WTC11 (cell line): ENCODE measurements at regions of chr2 and their contacts with region 1.

Region 1: DNA sequence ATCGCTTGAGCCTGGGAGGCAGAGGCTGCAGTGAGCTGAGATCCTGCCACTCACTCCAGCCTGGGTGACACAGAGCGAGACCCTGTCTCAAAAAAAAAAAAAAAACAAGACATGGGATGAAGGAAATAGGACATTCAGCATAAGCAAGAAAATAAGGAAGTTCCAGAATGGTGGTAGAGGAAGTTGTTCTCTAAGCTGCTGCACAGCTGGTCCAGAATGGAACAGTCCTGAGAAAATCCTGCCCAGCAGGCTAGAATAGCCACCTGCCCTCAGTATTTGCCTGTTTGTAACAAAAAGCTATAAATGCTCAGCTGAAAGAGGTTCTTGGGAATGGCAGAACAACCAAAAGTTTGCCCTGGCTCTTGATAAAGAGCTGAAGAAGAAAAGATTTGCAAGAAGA is 11.1 kb upstream of the MAPRE3 start:
- DNase-seq: no peak
- ATAC-seq: no peak
- H3K4me3 Mint-ChIP-seq: no peak overlapping the region
- H3K27ac Mint-ChIP-seq: no peak overlapping the region
- H3K4me1 Mint-ChIP-seq: no peaks in the 10 kb centered on the region
- H3K27me3 Mint-ChIP-seq: peaks cover 7% of the 10 kb centered on the region; the same call in 1 of the 2 replicates
- CTCF ChIP-seq: no peak

Region 2: GRCh38 chr2:26870585-26871095 is 88.7 kb before region 1 on chr2:
- CTCF ChIA-PET with region 1: no interaction called
- POLR2A ChIA-PET with region 1: no interaction called
- DNase-seq: no peak
- ATAC-seq: no peak
- H3K4me3 Mint-ChIP-seq: no peak overlapping the region
- H3K27ac Mint-ChIP-seq: no peak overlapping the region
- H3K4me1 Mint-ChIP-seq: peaks cover 5% of the 10 kb centered on the region; the same call in 1 of the 2 replicates
- H3K27me3 Mint-ChIP-seq: peaks cover 52% of the 10 kb centered on the region
- CTCF ChIP-seq: no peak

Region 3: DNA sequence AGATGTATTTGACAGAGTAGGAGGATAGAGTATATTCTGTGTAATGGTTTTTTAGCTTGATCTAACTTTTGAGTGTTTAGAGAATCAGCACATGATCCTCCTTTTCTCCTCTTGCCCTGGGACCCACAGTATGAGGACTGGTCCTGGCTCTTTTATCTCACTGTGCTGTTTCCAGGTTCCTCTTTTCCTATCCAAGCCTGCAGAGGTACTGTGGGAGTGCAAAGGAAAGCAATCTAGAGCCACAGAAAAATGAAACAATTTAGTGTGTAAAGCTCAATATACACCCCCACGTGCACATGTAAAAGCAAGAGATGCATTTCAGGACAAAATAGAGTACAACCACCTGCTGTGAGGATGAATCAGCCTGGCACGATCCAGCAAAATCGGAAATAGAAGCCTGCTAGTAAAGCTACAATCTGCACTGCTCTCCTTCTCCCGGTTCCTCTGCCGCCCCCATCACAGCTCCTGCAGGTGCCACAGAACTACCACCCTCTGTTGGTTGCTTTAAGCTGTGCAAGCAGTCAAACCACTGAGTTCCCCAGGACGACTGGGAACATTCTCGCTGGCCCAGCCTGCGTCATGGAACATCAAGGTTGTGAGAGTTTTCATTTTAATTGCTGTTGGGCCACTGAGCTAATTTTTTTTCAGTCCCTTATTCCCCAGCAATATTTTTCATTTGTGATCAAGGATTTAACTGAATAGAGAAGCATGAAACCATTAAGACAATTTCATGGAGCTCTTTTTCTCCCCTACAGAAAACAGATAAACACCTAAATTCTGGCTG is 36.7 kb before region 1 on chr2:
- CTCF ChIA-PET with region 1: interaction called, 14 read pairs
- POLR2A ChIA-PET with region 1: no interaction called
- DNase-seq: peak; percentile 73
- ATAC-seq: peak; percentile 90
- H3K4me3 Mint-ChIP-seq: no peak overlapping the region
- H3K27ac Mint-ChIP-seq: no peak overlapping the region
- H3K4me1 Mint-ChIP-seq: peaks cover 13% of the 10 kb centered on the region
- H3K27me3 Mint-ChIP-seq: no peaks in the 10 kb centered on the region
- CTCF ChIP-seq: peak; percentile 28; the same call in 1 of the 2 replicates

Region 4: DNA sequence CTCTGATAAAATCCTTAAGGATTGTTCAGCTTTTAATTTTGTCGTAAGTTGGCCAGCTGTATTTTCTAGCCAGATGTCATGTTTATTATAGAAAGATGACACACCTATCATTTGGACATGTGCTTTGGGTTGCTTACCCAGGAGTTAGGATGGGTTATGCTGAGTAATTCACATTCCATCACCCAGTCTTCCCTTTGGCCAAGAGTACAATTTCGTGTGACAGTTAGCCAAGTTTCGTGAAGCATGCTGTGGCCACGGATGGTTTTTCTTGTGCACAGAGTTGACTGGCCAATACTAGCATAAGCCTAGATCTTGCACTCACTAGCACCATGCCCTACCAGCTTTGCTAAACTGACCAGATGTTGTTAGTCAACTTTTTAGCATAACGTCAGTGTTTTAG is 16.9 kb after region 1 on chr2:
- CTCF ChIA-PET with region 1: interaction called, 30 read pairs
- POLR2A ChIA-PET with region 1: interaction called, 3 read pairs
- DNase-seq: no peak
- ATAC-seq: no peak
- H3K4me3 Mint-ChIP-seq: no peak overlapping the region
- H3K27ac Mint-ChIP-seq: no peak overlapping the region
- H3K4me1 Mint-ChIP-seq: peaks cover 31% of the 10 kb centered on the region
- H3K27me3 Mint-ChIP-seq: peaks cover 14% of the 10 kb centered on the region
- CTCF ChIP-seq: no peak

Region 5: DNA sequence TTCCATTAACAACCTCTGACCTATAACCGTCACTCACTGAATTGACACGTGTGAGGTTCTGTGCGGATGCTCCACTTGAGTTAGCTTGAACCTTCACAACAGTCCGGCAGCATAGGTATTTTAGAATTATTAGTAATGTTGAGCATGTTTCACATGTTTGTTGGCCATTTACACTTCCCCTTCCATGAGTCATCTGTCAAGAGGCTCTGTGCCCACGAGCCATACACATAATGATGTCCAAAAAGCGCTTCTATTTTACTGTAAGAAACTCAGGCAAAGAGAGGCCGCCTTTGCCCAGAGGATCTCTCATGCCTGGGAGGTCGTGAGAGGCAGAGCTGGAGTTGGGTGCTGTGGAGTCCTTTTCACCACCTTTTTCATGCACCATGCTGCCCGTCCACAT is 44.5 kb after region 1 on chr2:
- CTCF ChIA-PET with region 1: interaction called, 19 read pairs
- POLR2A ChIA-PET with region 1: no interaction called
- DNase-seq: no peak
- ATAC-seq: no peak
- H3K4me3 Mint-ChIP-seq: no peak overlapping the region
- H3K27ac Mint-ChIP-seq: no peak overlapping the region
- H3K4me1 Mint-ChIP-seq: peaks cover 6% of the 10 kb centered on the region
- H3K27me3 Mint-ChIP-seq: no peaks in the 10 kb centered on the region
- CTCF ChIP-seq: no peak

Region 6: GRCh38 chr2:27024188-27024587 is 64.9 kb after region 1 on chr2:
- CTCF ChIA-PET with region 1: interaction called, 596 read pairs
- POLR2A ChIA-PET with region 1: no interaction called
- DNase-seq: peak; percentile 87
- ATAC-seq: peak; percentile 83
- H3K4me3 Mint-ChIP-seq: no peak overlapping the region
- H3K27ac Mint-ChIP-seq: no peak overlapping the region
- H3K4me1 Mint-ChIP-seq: peaks cover 6% of the 10 kb centered on the region
- H3K27me3 Mint-ChIP-seq: no peaks in the 10 kb centered on the region
- CTCF ChIP-seq: peak; percentile 44; the same call in 1 of the 2 replicates

Region 7: GRCh38 chr2:27050281-27050995 is 91.1 kb after region 1 on chr2:
- CTCF ChIA-PET with region 1: interaction called, 32 read pairs
- POLR2A ChIA-PET with region 1: no interaction called
- DNase-seq: peak; percentile 95
- ATAC-seq: peak; percentile 84
- H3K4me3 Mint-ChIP-seq: peak overlapping the region; percentile 93
- H3K27ac Mint-ChIP-seq: peak overlapping the region; percentile 98
- H3K4me1 Mint-ChIP-seq: peaks cover 12% of the 10 kb centered on the region
- H3K27me3 Mint-ChIP-seq: peaks cover 10% of the 10 kb centered on the region
- CTCF ChIP-seq: no peak

Region 8: GRCh38 chr2:27065128-27065527 is 105.8 kb after region 1 on chr2:
- CTCF ChIA-PET with region 1: no interaction called
- POLR2A ChIA-PET with region 1: no interaction called
- DNase-seq: no peak
- ATAC-seq: no peak
- H3K4me3 Mint-ChIP-seq: no peak overlapping the region
- H3K27ac Mint-ChIP-seq: no peak overlapping the region
- H3K4me1 Mint-ChIP-seq: no peaks in the 10 kb centered on the region
- H3K27me3 Mint-ChIP-seq: no peaks in the 10 kb centered on the region
- CTCF ChIP-seq: no peak

Region 9: GRCh38 chr2:27441958-27442919 is 482.9 kb after region 1 on chr2 and contains the start of gene KRTCAP3:
- CTCF ChIA-PET with region 1: no interaction called
- POLR2A ChIA-PET with region 1: no interaction called
- DNase-seq: peak; percentile 91
- ATAC-seq: peak; percentile 96
- H3K4me3 Mint-ChIP-seq: peak within 1 kb of the TSS; percentile 74
- H3K27ac Mint-ChIP-seq: peak within 1 kb of the TSS; percentile 63
- H3K4me1 Mint-ChIP-seq: peaks cover 14% of the 10 kb centered on the region
- H3K27me3 Mint-ChIP-seq: no peaks in the 10 kb centered on the region
- CTCF ChIP-seq: peak; percentile 63
- total RNA-seq, gene KRTCAP3: 41.9 to 50.0 TPM (median 49.2 TPM) in 3 replicates